ENCODE measurements at regions of chr6 and their contacts with region 1.

Region 1: GRCh38 chr6:96897383-96898240 is at the start of gene NDUFAF4:
- DNase-seq: peak; percentile 94 to 98 (median 96)
- ATAC-seq: peak; percentile 97
- H3K4me3 ChIP-seq: peak within 1 kb of the TSS; percentile 93
- H3K27ac ChIP-seq: peak within 1 kb of the TSS; percentile 96
- H3K4me1 ChIP-seq: peaks cover 4 to 13% of the 10 kb centered on the region in 2 experiments; a peak in 4 of 5 replicates
- H3K27me3 ChIP-seq: no peaks in the 10 kb centered on the region
- CTCF ChIP-seq: peak; percentile 83 to 93 (median 92)
- EP300 ChIP-seq: peak; percentile 24; the same call in 1 of the 2 replicates
- POLR2A ChIP-seq: peak; percentile 87
- RAD21 ChIP-seq: peak; percentile 59 to 65
- polyA plus RNA-seq, gene NDUFAF4: 361 to 418 TPM

Region 2: DNA sequence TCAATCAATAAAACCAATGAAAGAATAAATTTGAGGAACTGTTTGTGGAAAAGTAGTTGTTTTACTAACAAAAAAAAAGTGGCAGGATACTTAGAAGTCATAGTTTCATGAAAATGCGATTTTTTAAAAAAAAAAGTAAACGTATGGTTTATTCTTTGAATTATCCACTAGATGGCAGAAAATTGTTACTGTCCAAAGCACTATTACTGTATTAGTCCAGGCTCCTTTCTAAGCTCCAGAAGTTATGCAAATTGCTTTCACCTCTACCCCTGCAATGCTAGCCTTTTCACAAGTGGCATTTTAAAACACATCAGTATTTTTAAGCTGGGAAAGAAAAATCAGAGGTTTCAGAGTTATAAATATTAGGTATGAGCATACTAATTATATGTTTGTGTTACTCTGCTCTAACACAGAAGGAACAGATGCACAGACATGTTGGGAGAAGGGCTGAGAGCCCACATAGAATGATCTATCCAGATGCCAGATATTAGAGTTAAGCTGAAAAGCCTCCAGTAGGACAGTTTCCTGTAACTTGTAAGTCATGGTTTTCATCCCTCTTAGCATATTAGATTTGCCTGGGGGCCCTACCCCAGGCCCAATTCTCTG is 270.8 kb before region 1 on chr6:
- CTCF ChIA-PET with region 1: interaction called, 11 read pairs
- POLR2A ChIA-PET with region 1: no interaction called
- in situ Hi-C with region 1: loop called (anchors 10 kb)
- intact Hi-C with region 1: loop called (anchors 2 kb)
- DNase-seq: peak; percentile 8 to 21 (median 14)
- ATAC-seq: peak; percentile 82
- H3K4me3 ChIP-seq: no peak overlapping the region
- H3K27ac ChIP-seq: no peak overlapping the region
- H3K4me1 ChIP-seq: 0 out of 5 replicates have a peak, but pooled peaks cover 0 to 5% of the 10 kb centered on the region in 2 experiments
- H3K27me3 ChIP-seq: no peaks in the 10 kb centered on the region
- CTCF ChIP-seq: peak in 2 of 3 experiments; percentile 9 to 64; a peak in 3 of 6 replicates
- EP300 ChIP-seq: no peak
- POLR2A ChIP-seq: no peak
- RAD21 ChIP-seq: peak; percentile 65 to 85

Region 3: GRCh38 chr6:96837081-96837971 is 60.3 kb before region 1 on chr6 and contains the start of gene GPR63:
- CTCF ChIA-PET with region 1: no interaction called
- POLR2A ChIA-PET with region 1: no interaction called
- in situ Hi-C with region 1: no loop called
- intact Hi-C with region 1: loop called (anchors 2 kb)
- DNase-seq: peak; percentile 90 to 93 (median 91)
- ATAC-seq: peak; percentile 94
- H3K4me3 ChIP-seq: peak within 1 kb of the TSS; percentile 93
- H3K27ac ChIP-seq: peak within 1 kb of the TSS; percentile 51
- H3K4me1 ChIP-seq: peaks cover 4 to 7% of the 10 kb centered on the region in 2 experiments; a peak in 4 of 5 replicates
- H3K27me3 ChIP-seq: peaks cover 0 to 9% of the 10 kb centered on the region in 2 experiments; a peak in 2 of 5 replicates
- CTCF ChIP-seq: no peak
- EP300 ChIP-seq: no peak
- POLR2A ChIP-seq: peak; percentile 85
- RAD21 ChIP-seq: no peak
- polyA plus RNA-seq, gene GPR63: 2.1 to 2.5 TPM

Region 4: DNA sequence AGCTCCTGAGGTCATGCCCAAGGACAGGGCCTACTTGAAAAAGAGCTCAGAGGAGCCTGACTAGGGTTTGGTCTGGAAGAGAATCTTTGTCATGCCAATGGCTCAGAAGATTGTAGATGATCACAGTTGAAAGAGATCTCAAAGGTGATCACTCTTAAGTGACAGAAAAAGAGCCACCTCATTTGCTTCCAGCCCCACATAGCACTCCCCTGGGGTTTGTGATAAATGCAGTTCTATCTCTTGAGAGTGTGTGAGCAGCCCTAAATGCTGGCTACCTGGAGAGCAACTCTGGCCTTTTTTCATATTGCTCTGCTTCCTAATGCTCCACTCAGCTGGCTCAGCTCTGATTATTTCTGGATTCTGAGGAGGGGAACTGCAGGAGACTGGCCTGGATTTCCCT is 66.2 kb after region 1 on chr6:
- CTCF ChIA-PET with region 1: no interaction called
- POLR2A ChIA-PET with region 1: no interaction called
- in situ Hi-C with region 1: no loop called
- intact Hi-C with region 1: loop called (anchors 5 kb)
- DNase-seq: peak in 1 of 4 experiments; percentile 6
- ATAC-seq: peak; percentile 68
- H3K4me3 ChIP-seq: no peak overlapping the region
- H3K27ac ChIP-seq: peak overlapping the region; percentile 38; the same call in 1 of the 3 replicates
- H3K4me1 ChIP-seq: peaks cover 4 to 6% of the 10 kb centered on the region in 2 experiments; a peak in 1 of 5 replicates
- H3K27me3 ChIP-seq: no peaks in the 10 kb centered on the region; a peak in 1 of 5 replicates
- CTCF ChIP-seq: no peak
- EP300 ChIP-seq: no peak
- POLR2A ChIP-seq: no peak
- RAD21 ChIP-seq: no peak

Region 5: GRCh38 chr6:97059473-97059872 is 161.9 kb after region 1 on chr6:
- CTCF ChIA-PET with region 1: interaction called, 50 read pairs
- POLR2A ChIA-PET with region 1: no interaction called
- in situ Hi-C with region 1: loop called (anchors 5 kb)
- intact Hi-C with region 1: loop called (anchors 1 kb)
- DNase-seq: peak; percentile 15 to 33 (median 29)
- ATAC-seq: peak; percentile 78
- H3K4me3 ChIP-seq: no peak overlapping the region
- H3K27ac ChIP-seq: no peak overlapping the region
- H3K4me1 ChIP-seq: no peaks in the 10 kb centered on the region
- H3K27me3 ChIP-seq: no peaks in the 10 kb centered on the region; a peak in 1 of 5 replicates
- CTCF ChIP-seq: peak; percentile 21 to 74 (median 24); a peak in 3 of 6 replicates
- EP300 ChIP-seq: no peak
- POLR2A ChIP-seq: no peak
- RAD21 ChIP-seq: peak; percentile 79 to 87

Region 6: DNA sequence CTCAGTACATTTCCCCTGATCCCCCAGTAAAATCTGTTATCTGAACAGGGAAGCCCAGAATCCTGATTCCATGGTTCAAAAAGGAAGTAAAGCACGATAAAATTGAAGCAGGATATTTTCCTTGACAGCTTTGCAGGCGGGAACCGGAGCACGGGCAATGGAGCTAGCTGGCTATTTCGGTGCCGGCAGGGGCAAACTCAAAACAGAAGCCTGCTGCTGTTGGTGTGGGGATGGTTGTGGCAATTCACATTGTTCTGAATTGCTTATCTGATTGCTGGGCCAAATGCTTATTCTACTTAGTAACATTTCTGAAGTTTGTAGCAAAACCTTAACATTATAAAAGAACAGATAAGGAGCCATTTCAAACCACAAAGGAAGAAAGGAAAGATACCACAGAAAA is 213.0 kb after region 1 on chr6:
- CTCF ChIA-PET with region 1: no interaction called
- POLR2A ChIA-PET with region 1: no interaction called
- in situ Hi-C with region 1: no loop called
- intact Hi-C with region 1: no loop called
- DNase-seq: no peak
- ATAC-seq: no peak
- H3K4me3 ChIP-seq: no peak overlapping the region
- H3K27ac ChIP-seq: no peak overlapping the region
- H3K4me1 ChIP-seq: no peaks in the 10 kb centered on the region
- H3K27me3 ChIP-seq: no peaks in the 10 kb centered on the region
- CTCF ChIP-seq: no peak
- EP300 ChIP-seq: no peak
- POLR2A ChIP-seq: no peak
- RAD21 ChIP-seq: no peak

Measured in K562 (cell line).